ENCODE measurements at regions of chr10 and their contacts with region 1.

Region 1: DNA sequence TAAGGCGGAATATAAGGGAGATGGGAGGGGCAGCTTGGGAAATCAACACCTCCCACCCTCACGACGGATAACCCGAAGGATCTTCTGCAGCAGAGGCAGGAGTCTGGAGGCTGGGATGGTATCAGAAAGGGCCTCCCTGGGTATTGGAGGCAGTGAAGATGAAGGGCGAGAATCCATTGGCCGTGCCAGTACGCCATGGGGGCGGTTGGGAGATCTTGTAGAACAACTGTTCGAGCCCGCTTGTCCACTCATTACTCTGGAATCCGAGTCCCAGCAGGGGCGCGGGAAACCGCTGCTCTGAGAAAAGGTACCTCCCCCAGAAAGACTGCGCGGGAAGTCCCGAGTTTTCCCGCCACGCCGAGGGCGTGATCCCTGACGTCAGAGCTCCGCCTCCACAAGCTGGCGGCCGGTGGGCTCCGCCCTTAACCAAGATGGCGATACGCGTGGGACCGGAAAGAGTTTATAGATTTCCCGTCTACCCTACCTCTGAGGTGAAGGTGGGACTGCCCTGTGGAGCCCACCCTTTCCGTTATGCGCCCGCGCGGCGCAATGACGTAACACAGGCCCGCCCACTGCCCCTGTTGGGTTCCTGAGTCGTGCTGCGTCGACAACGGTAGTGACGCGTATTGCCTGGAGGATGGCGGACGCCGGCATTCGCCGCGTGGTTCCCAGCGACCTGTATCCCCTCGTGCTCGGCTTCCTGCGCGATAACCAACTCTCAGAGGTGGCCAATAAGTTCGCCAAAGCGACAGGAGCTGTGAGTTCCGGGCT is at the start of gene NOLC1:
- DNase-seq: peak; percentile 100
- H3K4me3 Mint-ChIP-seq: peak within 1 kb of the TSS; percentile 99
- H3K27ac Mint-ChIP-seq: peak within 1 kb of the TSS; percentile 99
- H3K4me1 Mint-ChIP-seq: peaks cover 54% of the 10 kb centered on the region
- H3K27me3 Mint-ChIP-seq: no peaks in the 10 kb centered on the region
- total RNA-seq, gene NOLC1: 80.5 to 81.3 TPM

Region 2: DNA sequence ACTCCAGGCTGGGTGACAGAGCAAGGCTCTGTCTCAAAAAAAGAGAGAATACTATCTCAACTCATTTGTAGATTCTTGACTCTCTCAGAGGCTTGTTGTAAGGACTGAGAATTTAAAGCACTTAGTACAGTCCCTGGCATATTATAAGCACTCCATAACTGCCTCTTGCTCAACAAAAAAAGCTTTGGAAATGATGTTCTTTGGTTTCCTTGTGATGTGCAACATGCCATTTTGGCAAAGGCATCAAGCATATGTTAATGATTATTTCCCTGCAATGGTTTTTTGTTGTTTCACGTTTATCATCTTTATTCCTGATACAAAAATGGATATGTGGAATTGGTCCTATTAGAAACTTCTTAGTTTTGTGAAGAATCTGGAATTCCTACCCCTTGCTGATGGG is 15.9 kb after region 1 on chr10:
- CTCF ChIA-PET with region 1: interaction called, 30 read pairs
- POLR2A ChIA-PET with region 1: interaction called, 9 read pairs
- DNase-seq: no peak
- H3K4me3 Mint-ChIP-seq: no peak overlapping the region
- H3K27ac Mint-ChIP-seq: no peak overlapping the region
- H3K4me1 Mint-ChIP-seq: peaks cover 24% of the 10 kb centered on the region
- H3K27me3 Mint-ChIP-seq: no peaks in the 10 kb centered on the region

Region 3: GRCh38 chr10:102291221-102291905 is 139.4 kb after region 1 on chr10:
- CTCF ChIA-PET with region 1: no interaction called
- POLR2A ChIA-PET with region 1: no interaction called
- DNase-seq: no peak
- H3K4me3 Mint-ChIP-seq: no peak overlapping the region
- H3K27ac Mint-ChIP-seq: no peak overlapping the region
- H3K4me1 Mint-ChIP-seq: peaks cover 11% of the 10 kb centered on the region
- H3K27me3 Mint-ChIP-seq: no peaks in the 10 kb centered on the region

Measured in activated CD4-positive, alpha-beta T cell treated with anti-CD3 and anti-CD28 coated beads, Interleukin-2, amount 10 ng/mL, durations not matched to agents 7 days and 5 days (primary cell).